Adrenal gland (tissue), 19 donors: ENCODE measurements at regions of chr20 and their contacts with region 1.

Region 1: GRCh38 chr20:34312544-34313217 is 9.5 kb upstream of the AHCY start:
- DNase-seq: peak; percentile 86 to 95 (median 90)
- H3K4me3 ChIP-seq: no peak overlapping the region
- H3K27ac ChIP-seq: no peak overlapping the region
- H3K4me1 ChIP-seq: peaks cover 3 to 13% of the 10 kb centered on the region in 2 donors
- H3K27me3 ChIP-seq: no peaks in the 10 kb centered on the region
- CTCF ChIP-seq: peak; percentile 98 to 100 (median 100)
- POLR2A ChIP-seq: peak in 1 of 2 donors; percentile 17

Region 2: GRCh38 chr20:33630507-33630906 is 682.2 kb before region 1 on chr20:
- intact Hi-C with region 1: no loop called
- DNase-seq: no peak
- H3K4me3 ChIP-seq: no peak overlapping the region
- H3K27ac ChIP-seq: no peak overlapping the region
- H3K4me1 ChIP-seq: no peaks in the 10 kb centered on the region
- H3K27me3 ChIP-seq: no peaks in the 10 kb centered on the region
- CTCF ChIP-seq: no peak
- POLR2A ChIP-seq: no peak

Region 3: GRCh38 chr20:34010405-34010931 is 302.2 kb before region 1 on chr20:
- intact Hi-C with region 1: no loop called
- DNase-seq: no peak
- H3K4me3 ChIP-seq: no peak overlapping the region
- H3K27ac ChIP-seq: peak overlapping the region in 1 of 5 donors; percentile 22
- H3K4me1 ChIP-seq: peaks cover 0 to 51% of the 10 kb centered on the region in 2 donors
- H3K27me3 ChIP-seq: no peaks in the 10 kb centered on the region
- CTCF ChIP-seq: no peak
- POLR2A ChIP-seq: no peak

Region 4: DNA sequence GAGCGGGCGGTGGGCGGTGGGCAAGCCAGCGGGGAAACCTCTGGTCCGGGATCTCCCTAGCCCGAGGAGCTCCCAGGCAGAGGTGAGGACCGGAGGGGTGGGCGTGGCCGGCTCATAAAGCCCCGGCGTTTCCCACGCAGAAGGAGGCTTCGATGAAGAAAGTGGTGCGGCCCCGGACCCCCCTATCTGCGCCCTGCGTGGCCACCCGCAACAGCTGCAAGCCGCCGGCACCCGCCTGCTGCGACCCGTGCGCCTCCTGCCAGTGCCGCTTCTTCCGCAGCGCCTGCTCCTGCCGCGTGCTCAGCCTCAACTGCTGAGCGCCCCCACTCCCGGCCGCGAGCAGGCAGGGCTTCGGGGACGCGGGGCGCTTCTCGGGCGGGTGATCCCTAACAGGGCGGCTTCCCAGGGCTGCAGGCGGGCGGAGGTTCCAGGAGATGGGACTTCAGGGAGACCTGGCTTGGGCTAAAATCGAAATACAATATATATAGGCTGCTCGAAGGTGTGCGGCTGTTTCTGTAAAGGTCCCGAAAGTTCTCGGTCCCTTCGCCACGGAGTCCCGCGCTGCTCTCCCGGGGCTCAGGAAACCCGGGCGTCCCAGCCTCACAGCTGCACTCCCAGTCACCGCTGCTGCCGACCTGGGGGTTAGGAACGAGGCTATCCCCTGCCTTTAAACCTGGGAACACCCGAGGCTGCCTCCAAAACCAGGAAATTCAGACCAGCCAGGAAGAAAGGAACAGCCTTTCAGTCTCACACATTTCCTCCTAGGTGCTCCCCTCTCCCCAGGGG is 43.6 kb before region 1 on chr20:
- intact Hi-C with region 1: no loop called
- DNase-seq: peak in 4 of 7 donors; percentile 21 to 33 (median 28)
- H3K4me3 ChIP-seq: peak overlapping the region in 2 of 4 donors; percentile 19 to 57
- H3K27ac ChIP-seq: no peak overlapping the region
- H3K4me1 ChIP-seq: peaks cover 0 to 7% of the 10 kb centered on the region in 2 donors
- H3K27me3 ChIP-seq: no peaks in the 10 kb centered on the region
- CTCF ChIP-seq: no peak
- POLR2A ChIP-seq: no peak

Region 5: GRCh38 chr20:34473262-34473883 is 160.7 kb after region 1 on chr20:
- intact Hi-C with region 1: loop called in 1 of 2 experiments (anchors 10 kb)
- DNase-seq: peak in 3 of 7 donors; percentile 24 to 63 (median 24)
- H3K4me3 ChIP-seq: no peak overlapping the region
- H3K27ac ChIP-seq: no peak overlapping the region
- H3K4me1 ChIP-seq: peaks cover 0 to 8% of the 10 kb centered on the region in 2 donors
- H3K27me3 ChIP-seq: no peaks in the 10 kb centered on the region
- CTCF ChIP-seq: peak in 2 of 6 experiments; percentile 12
- POLR2A ChIP-seq: no peak

Region 6: GRCh38 chr20:34514897-34515483 is 202.3 kb after region 1 on chr20:
- intact Hi-C with region 1: loop called (anchors 5 to 10 kb)
- DNase-seq: no peak
- H3K4me3 ChIP-seq: peak overlapping the region in 2 of 4 donors; percentile 71 to 90
- H3K27ac ChIP-seq: peak overlapping the region; percentile 78 to 98 (median 94)
- H3K4me1 ChIP-seq: peaks cover 12 to 41% of the 10 kb centered on the region in 2 donors
- H3K27me3 ChIP-seq: no peaks in the 10 kb centered on the region
- CTCF ChIP-seq: no peak
- POLR2A ChIP-seq: peak in 1 of 2 donors; percentile 27

Region 7: GRCh38 chr20:34522969-34523871 is 210.5 kb after region 1 on chr20:
- intact Hi-C with region 1: loop called in 1 of 2 experiments (anchors 10 kb)
- DNase-seq: peak; percentile 51 to 85 (median 66)
- H3K4me3 ChIP-seq: no peak overlapping the region
- H3K27ac ChIP-seq: peak overlapping the region in 4 of 5 donors; percentile 6 to 73 (median 66)
- H3K4me1 ChIP-seq: peaks cover 37 to 68% of the 10 kb centered on the region in 2 donors
- H3K27me3 ChIP-seq: no peaks in the 10 kb centered on the region
- CTCF ChIP-seq: peak; percentile 32 to 68 (median 61)
- POLR2A ChIP-seq: no peak

Region 8: GRCh38 chr20:34768096-34768495 is 455.4 kb after region 1 on chr20:
- intact Hi-C with region 1: loop called in 1 of 2 experiments (anchors 10 kb)
- DNase-seq: no peak
- H3K4me3 ChIP-seq: no peak overlapping the region
- H3K27ac ChIP-seq: no peak overlapping the region
- H3K4me1 ChIP-seq: peaks cover 11 to 14% of the 10 kb centered on the region in 2 donors
- H3K27me3 ChIP-seq: no peaks in the 10 kb centered on the region
- CTCF ChIP-seq: no peak
- POLR2A ChIP-seq: no peak

Region 9: GRCh38 chr20:34948030-34948429 is 635.3 kb after region 1 on chr20:
- intact Hi-C with region 1: no loop called
- DNase-seq: no peak
- H3K4me3 ChIP-seq: no peak overlapping the region
- H3K27ac ChIP-seq: peak overlapping the region in 1 of 5 donors; percentile 47
- H3K4me1 ChIP-seq: peaks cover 0 to 5% of the 10 kb centered on the region in 2 donors
- H3K27me3 ChIP-seq: no peaks in the 10 kb centered on the region
- CTCF ChIP-seq: no peak
- POLR2A ChIP-seq: no peak